OCI-LY7 (cell line): ENCODE measurements at regions of chr6 and their contacts with region 1.

Region 1: GRCh38 chr6:137094411-137095008 is 49.7 kb upstream of the IL20RA start:
- DNase-seq: peak; percentile 83
- H3K4me3 ChIP-seq: no peak overlapping the region
- H3K27ac ChIP-seq: peak overlapping the region; percentile 42
- H3K4me1 ChIP-seq: peaks cover 53% of the 10 kb centered on the region
- CTCF ChIP-seq: peak; percentile 98

Region 2: GRCh38 chr6:137218917-137219663 is 124.6 kb after region 1 on chr6 and contains the start of gene IFNGR1:
- CTCF ChIA-PET with region 1: interaction called, 3 read pairs
- POLR2A ChIA-PET with region 1: interaction called, 9 read pairs
- intact Hi-C with region 1: loop called (anchors 2 kb)
- DNase-seq: peak; percentile 93
- H3K4me3 ChIP-seq: peak within 1 kb of the TSS; percentile 90
- H3K27ac ChIP-seq: peak within 1 kb of the TSS; percentile 59
- H3K4me1 ChIP-seq: peaks cover 69% of the 10 kb centered on the region
- CTCF ChIP-seq: no peak
- total RNA-seq, gene IFNGR1: 23.2 and 25.6 TPM in 2 replicates

Region 3: GRCh38 chr6:137313928-137314855 is 219.7 kb after region 1 on chr6:
- CTCF ChIA-PET with region 1: interaction called, 11 read pairs
- POLR2A ChIA-PET with region 1: interaction called, 4 read pairs
- intact Hi-C with region 1: loop called (anchors 1 kb)
- DNase-seq: peak; percentile 81
- H3K4me3 ChIP-seq: no peak overlapping the region
- H3K27ac ChIP-seq: no peak overlapping the region
- H3K4me1 ChIP-seq: peaks cover 4% of the 10 kb centered on the region
- CTCF ChIP-seq: peak; percentile 99

Region 4: GRCh38 chr6:137423444-137424168 is 329.1 kb after region 1 on chr6:
- CTCF ChIA-PET with region 1: no interaction called
- POLR2A ChIA-PET with region 1: no interaction called
- intact Hi-C with region 1: loop called (anchors 10 kb)
- DNase-seq: peak; percentile 65
- H3K4me3 ChIP-seq: peak overlapping the region; percentile 39
- H3K27ac ChIP-seq: peak overlapping the region; percentile 65
- H3K4me1 ChIP-seq: peaks cover 45% of the 10 kb centered on the region
- CTCF ChIP-seq: no peak

Region 5: DNA sequence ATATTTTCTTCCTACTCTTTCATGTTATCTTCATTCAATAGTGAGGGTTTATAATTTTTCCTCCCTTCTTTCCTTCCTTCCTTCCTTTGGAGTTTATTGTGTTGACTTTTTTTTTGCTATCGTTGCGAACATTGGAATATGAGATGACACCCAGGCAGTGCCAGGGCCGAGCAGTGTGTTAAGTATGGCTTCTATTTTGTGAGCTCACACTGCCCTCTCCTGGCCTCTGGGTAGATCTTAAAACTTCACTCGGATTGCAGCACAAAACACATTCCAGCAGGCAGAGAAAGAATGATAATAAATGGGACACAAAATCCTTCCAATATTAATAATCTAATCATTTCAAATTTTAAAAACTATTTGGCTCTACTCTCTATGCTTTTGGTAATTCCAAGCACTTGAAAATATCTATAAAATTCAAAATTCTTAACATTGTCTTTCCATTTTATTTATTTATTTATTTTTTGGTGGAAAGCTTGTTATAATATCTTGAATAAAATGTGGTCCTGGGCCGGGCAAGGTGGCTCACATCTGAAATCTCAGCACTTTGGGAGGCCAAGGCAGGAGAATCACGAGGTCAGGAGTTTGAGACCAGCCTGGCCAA is 547.1 kb after region 1 on chr6:
- CTCF ChIA-PET with region 1: no interaction called
- POLR2A ChIA-PET with region 1: no interaction called
- intact Hi-C with region 1: loop called (anchors 1 kb)
- DNase-seq: peak; percentile 76
- H3K4me3 ChIP-seq: no peak overlapping the region
- H3K27ac ChIP-seq: no peak overlapping the region
- H3K4me1 ChIP-seq: peaks cover 5% of the 10 kb centered on the region
- CTCF ChIP-seq: peak; percentile 86